HCT116 (cell line): ENCODE measurements at regions of chr3 and their contacts with region 1.

Region 1: DNA sequence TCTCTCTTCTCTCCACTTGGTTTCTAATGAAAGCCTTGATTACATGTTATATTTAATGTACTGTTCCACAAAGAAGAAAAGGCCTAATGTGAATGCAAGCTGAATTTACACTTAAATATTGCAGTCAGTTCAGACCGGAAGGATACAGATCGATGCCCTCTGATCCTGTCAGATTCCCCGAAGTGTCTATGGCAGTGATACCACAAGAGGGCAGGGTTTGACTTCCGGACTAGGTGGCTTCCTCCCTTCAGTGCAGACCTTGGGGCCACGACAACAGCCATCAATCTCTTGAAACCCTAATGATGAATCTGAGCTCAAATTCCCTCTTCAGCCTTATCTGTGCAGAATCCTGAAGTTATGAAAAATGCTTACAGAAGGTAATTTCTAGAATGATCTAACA is 29.5 kb downstream of the AGTR1 start:
- DNase-seq: peak; percentile 49
- ATAC-seq: peak; percentile 99
- H3K4me3 ChIP-seq: no peak overlapping the region
- H3K27ac ChIP-seq: no peak overlapping the region
- H3K4me1 ChIP-seq: 0 out of 4 replicates have a peak, but pooled peaks cover 0 to 4% of the 10 kb centered on the region in 2 experiments
- H3K27me3 ChIP-seq: no peaks in the 10 kb centered on the region
- CTCF ChIP-seq: peak; percentile 55 to 79 (median 73)
- POLR2A ChIP-seq: no peak
- RAD21 ChIP-seq: peak; percentile 79

Region 2: GRCh38 chr3:148532326-148532725 is 194.9 kb before region 1 on chr3:
- CTCF ChIA-PET with region 1: no interaction called
- POLR2A ChIA-PET with region 1: no interaction called
- RAD21 ChIA-PET with region 1: no interaction called
- intact Hi-C with region 1: no loop called
- DNase-seq: no peak
- ATAC-seq: no peak
- H3K4me3 ChIP-seq: no peak overlapping the region
- H3K27ac ChIP-seq: no peak overlapping the region
- H3K4me1 ChIP-seq: no peaks in the 10 kb centered on the region
- H3K27me3 ChIP-seq: no peaks in the 10 kb centered on the region
- CTCF ChIP-seq: no peak
- POLR2A ChIP-seq: no peak
- RAD21 ChIP-seq: no peak

Region 3: DNA sequence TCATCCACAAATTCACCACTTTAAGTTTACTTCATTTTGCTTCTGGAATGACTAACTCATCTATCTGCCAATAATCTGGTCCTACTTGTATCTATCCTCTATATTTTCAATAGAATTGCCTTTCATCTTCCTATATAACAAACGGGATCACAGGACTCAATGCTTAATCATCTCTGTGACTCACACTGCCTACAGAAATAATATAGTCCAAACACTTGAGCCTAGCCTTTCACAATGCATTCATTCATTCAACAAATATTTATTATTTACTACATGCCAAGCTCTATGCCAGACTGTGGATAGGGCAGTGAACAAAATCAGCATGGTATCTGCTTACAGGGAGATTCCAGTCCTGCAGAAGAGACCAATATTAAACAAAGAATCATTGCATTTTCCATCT is 46.2 kb before region 1 on chr3:
- CTCF ChIA-PET with region 1: no interaction called
- POLR2A ChIA-PET with region 1: no interaction called
- RAD21 ChIA-PET with region 1: no interaction called
- intact Hi-C with region 1: no loop called
- DNase-seq: peak; percentile 44
- ATAC-seq: peak; percentile 95
- H3K4me3 ChIP-seq: no peak overlapping the region
- H3K27ac ChIP-seq: no peak overlapping the region
- H3K4me1 ChIP-seq: peaks cover 0 to 15% of the 10 kb centered on the region in 2 experiments; a peak in 3 of 4 replicates
- H3K27me3 ChIP-seq: no peaks in the 10 kb centered on the region
- CTCF ChIP-seq: no peak
- POLR2A ChIP-seq: no peak
- RAD21 ChIP-seq: no peak

Region 4: GRCh38 chr3:148861277-148861869 is 134.1 kb after region 1 on chr3:
- CTCF ChIA-PET with region 1: interaction called, 3 read pairs
- POLR2A ChIA-PET with region 1: no interaction called
- RAD21 ChIA-PET with region 1: no interaction called
- intact Hi-C with region 1: loop called (anchors 5 kb)
- DNase-seq: peak; percentile 40
- ATAC-seq: peak; percentile 73
- H3K4me3 ChIP-seq: no peak overlapping the region
- H3K27ac ChIP-seq: no peak overlapping the region
- H3K4me1 ChIP-seq: no peaks in the 10 kb centered on the region
- H3K27me3 ChIP-seq: no peaks in the 10 kb centered on the region
- CTCF ChIP-seq: peak; percentile 53 to 84 (median 67)
- POLR2A ChIP-seq: no peak
- RAD21 ChIP-seq: peak; percentile 80

Region 5: GRCh38 chr3:148880681-148881080 is 153.4 kb after region 1 on chr3:
- CTCF ChIA-PET with region 1: interaction called, 3 read pairs
- POLR2A ChIA-PET with region 1: no interaction called
- RAD21 ChIA-PET with region 1: no interaction called
- intact Hi-C with region 1: loop called (anchors 1 kb)
- DNase-seq: peak; percentile 13
- ATAC-seq: peak; percentile 76
- H3K4me3 ChIP-seq: no peak overlapping the region
- H3K27ac ChIP-seq: no peak overlapping the region
- H3K4me1 ChIP-seq: no peaks in the 10 kb centered on the region
- H3K27me3 ChIP-seq: no peaks in the 10 kb centered on the region
- CTCF ChIP-seq: peak; percentile 20 to 45 (median 38); a peak in 4 of 6 replicates
- POLR2A ChIP-seq: no peak
- RAD21 ChIP-seq: peak; percentile 56

Region 6: GRCh38 chr3:148943506-148944205 is 216.4 kb after region 1 on chr3:
- CTCF ChIA-PET with region 1: interaction called, 17 read pairs
- POLR2A ChIA-PET with region 1: no interaction called
- RAD21 ChIA-PET with region 1: no interaction called
- intact Hi-C with region 1: loop called (anchors 1 kb)
- DNase-seq: peak; percentile 66
- ATAC-seq: peak; percentile 80
- H3K4me3 ChIP-seq: no peak overlapping the region
- H3K27ac ChIP-seq: no peak overlapping the region
- H3K4me1 ChIP-seq: peaks cover 0 to 6% of the 10 kb centered on the region in 2 experiments; a peak in 2 of 4 replicates
- H3K27me3 ChIP-seq: no peaks in the 10 kb centered on the region
- CTCF ChIP-seq: peak; percentile 65 to 83 (median 80)
- POLR2A ChIP-seq: no peak
- RAD21 ChIP-seq: peak; percentile 90